ENCODE measurements at regions of chr2 and their contacts with region 1.

Region 1: DNA sequence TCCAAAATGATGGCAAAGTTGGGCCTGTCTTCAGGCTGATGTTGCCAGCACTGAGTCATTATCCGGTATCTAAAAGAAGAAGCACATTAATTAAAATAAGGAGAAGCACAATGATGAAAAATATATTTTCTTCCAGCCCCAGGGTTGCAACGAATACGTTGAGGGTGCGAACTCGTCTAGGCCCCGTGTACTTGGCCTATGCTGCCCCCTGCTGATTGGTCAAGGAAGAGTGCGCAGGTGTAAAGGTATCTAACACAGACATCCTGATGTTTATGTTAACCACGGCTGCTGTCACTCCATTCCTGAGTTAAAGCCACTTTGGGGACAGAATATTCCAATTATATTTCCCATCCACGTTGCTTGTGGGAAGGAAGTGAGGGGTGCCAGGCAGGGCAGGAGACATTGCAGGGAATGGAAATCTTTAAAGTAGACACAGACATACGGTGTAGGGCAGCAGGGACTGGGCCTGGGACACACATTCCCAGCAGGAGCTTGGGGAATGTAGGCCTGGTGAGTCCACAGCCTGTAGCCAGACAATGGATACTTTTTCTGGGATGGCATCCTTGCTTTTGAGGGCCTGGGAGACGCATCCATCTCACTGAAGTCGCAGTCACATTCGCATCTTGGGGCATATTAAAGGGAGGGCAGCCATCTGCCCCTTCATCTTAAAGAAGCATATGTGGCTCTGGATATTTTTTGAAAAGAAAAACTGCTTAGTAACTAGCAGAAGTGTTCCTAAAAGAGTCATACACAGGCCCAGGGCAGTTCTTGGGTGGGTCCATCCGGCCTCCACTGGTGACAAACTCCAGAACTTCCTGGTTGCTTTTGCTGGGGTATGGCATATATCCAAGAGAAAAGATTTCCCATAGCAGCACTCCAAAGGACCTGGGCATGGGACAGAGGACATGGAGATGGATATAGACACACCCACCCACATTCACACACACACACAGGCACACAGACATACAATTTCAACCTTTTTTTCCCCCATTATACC is 81.9 kb downstream of the CLIP4 start:
- DNase-seq: peak; percentile 73
- CTCF ChIP-seq: peak; percentile 78

Region 2: DNA sequence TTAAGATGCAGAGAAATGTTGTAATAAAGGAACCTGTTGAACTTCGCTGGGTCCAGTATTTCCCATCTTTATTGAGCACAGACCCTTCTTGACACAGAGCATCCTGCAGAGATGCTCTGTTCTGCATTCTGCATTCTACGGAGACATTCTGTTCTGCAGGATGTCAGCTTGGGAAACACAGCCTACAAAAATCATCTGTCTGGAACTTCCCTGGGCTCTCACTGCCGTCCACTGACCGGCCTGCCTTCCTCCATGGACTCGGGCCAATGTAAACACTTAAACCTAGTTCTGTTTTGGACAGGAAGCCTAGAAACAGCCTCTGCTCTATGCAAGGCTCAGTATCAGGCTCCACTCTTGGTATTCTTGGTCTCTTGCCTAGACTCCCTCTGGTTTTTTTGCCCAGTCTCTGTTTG is 535.5 kb before region 1 on chr2:
- in situ Hi-C with region 1: no loop called
- DNase-seq: no peak
- CTCF ChIP-seq: no peak

Region 3: DNA sequence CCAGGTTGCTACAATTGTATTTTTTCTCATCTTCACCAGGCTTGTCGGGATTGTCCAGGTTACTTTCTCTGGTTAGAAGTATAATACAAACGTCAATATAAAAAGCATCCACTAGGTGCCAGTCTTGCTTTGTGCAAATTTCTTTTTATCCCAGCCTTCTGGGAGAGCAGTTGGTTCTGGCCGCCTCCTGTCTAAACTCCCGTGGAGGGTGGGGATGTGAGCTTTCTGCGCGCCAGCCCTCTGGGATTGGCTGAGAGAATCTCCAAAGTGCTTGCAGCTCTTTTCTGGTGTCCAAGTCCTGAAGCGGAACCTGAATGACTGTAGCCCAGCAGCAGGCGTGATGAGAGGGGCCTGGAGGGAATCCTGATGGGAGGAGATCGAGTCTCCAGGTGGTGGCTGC is 238.4 kb before region 1 on chr2:
- in situ Hi-C with region 1: loop called (anchors 5 kb)
- DNase-seq: peak; percentile 73
- CTCF ChIP-seq: peak; percentile 58

Measured in GM13977 (cell line).